PC-9 (cell line): ENCODE measurements at regions of chr2 and their contacts with region 1.

Region 1: GRCh38 chr2:20231632-20232031 is 6.7 kb upstream of the SDC1 start:
- DNase-seq: peak; percentile 96 to 100
- H3K4me3 ChIP-seq: no peak overlapping the region; the same call in 1 of the 2 replicates
- H3K27ac ChIP-seq: peak overlapping the region; percentile 99
- H3K4me1 ChIP-seq: peaks cover 61% of the 10 kb centered on the region
- H3K27me3 ChIP-seq: no peaks in the 10 kb centered on the region
- CTCF ChIP-seq: no peak

Region 2: GRCh38 chr2:20051532-20052228 is 180.0 kb before region 1 on chr2 and contains the start of gene LAPTM4A:
- CTCF ChIA-PET with region 1: no interaction called
- POLR2A ChIA-PET with region 1: interaction called, 19 read pairs
- intact Hi-C with region 1: loop called (anchors 5 kb)
- DNase-seq: peak; percentile 96 to 100
- H3K4me3 ChIP-seq: peak within 1 kb of the TSS; percentile 85
- H3K27ac ChIP-seq: peak within 1 kb of the TSS; percentile 94
- H3K4me1 ChIP-seq: peaks cover 36% of the 10 kb centered on the region
- H3K27me3 ChIP-seq: no peaks in the 10 kb centered on the region
- CTCF ChIP-seq: no peak
- total RNA-seq, gene LAPTM4A: 96.6 and 125 TPM in 2 replicates

Region 3: GRCh38 chr2:20106746-20107145 is 124.9 kb before region 1 on chr2:
- CTCF ChIA-PET with region 1: interaction called, 11 read pairs
- POLR2A ChIA-PET with region 1: interaction called, 4 read pairs
- intact Hi-C with region 1: loop called (anchors 2 kb)
- DNase-seq: peak; percentile 70 to 83
- H3K4me3 ChIP-seq: peak overlapping the region; percentile 68
- H3K27ac ChIP-seq: peak overlapping the region; percentile 32; the same call in 1 of the 2 replicates
- H3K4me1 ChIP-seq: peaks cover 45% of the 10 kb centered on the region
- H3K27me3 ChIP-seq: no peaks in the 10 kb centered on the region
- CTCF ChIP-seq: peak; percentile 92

Region 4: GRCh38 chr2:20186078-20186854 is 45.4 kb before region 1 on chr2:
- CTCF ChIA-PET with region 1: interaction called, 8 read pairs
- POLR2A ChIA-PET with region 1: interaction called, 11 read pairs
- intact Hi-C with region 1: loop called (anchors 2 kb)
- DNase-seq: peak; percentile 74 to 93
- H3K4me3 ChIP-seq: peak overlapping the region; percentile 54
- H3K27ac ChIP-seq: peak overlapping the region; percentile 92
- H3K4me1 ChIP-seq: peaks cover 59% of the 10 kb centered on the region
- H3K27me3 ChIP-seq: no peaks in the 10 kb centered on the region
- CTCF ChIP-seq: no peak

Region 5: GRCh38 chr2:20207051-20207450 is 24.6 kb before region 1 on chr2:
- CTCF ChIA-PET with region 1: no interaction called
- POLR2A ChIA-PET with region 1: no interaction called
- intact Hi-C with region 1: no loop called
- DNase-seq: no peak
- H3K4me3 ChIP-seq: no peak overlapping the region
- H3K27ac ChIP-seq: no peak overlapping the region
- H3K4me1 ChIP-seq: peaks cover 9% of the 10 kb centered on the region; the same call in 1 of the 2 replicates
- H3K27me3 ChIP-seq: no peaks in the 10 kb centered on the region
- CTCF ChIP-seq: no peak

Region 6: DNA sequence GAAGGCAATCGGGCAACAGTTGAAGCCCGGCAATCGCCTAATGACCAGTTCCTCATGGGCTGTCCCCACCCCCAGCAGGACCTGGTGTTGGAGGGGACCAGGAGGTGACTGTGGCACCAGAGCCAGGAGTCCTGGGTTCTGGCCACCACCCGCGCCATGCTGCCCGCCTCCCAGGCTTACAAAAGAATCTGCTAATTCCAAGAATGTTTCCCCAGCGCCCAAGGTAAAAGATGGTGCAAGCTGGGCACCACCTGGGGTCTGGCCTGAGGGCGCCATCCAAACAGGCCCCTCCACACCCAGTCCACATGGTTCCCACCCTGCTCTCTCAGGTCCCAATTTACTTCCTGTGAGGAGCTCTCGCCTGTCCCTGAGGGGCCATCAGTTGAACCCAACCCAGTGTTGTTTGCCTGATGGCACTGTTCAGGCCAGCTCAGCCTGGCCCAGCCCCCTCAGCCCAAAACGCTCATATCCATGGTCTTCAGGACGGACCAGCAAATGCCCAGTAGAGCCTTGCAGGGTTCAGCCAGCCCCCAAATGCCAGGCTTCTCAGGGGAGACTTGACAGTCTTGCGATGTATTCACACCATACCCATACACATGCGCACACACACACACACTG is 11.8 kb before region 1 on chr2:
- CTCF ChIA-PET with region 1: interaction called, 11 read pairs
- POLR2A ChIA-PET with region 1: interaction called, 11 read pairs
- intact Hi-C with region 1: loop called (anchors 1 kb)
- DNase-seq: no peak
- H3K4me3 ChIP-seq: no peak overlapping the region
- H3K27ac ChIP-seq: no peak overlapping the region
- H3K4me1 ChIP-seq: peaks cover 34% of the 10 kb centered on the region
- H3K27me3 ChIP-seq: no peaks in the 10 kb centered on the region
- CTCF ChIP-seq: no peak

Region 7: DNA sequence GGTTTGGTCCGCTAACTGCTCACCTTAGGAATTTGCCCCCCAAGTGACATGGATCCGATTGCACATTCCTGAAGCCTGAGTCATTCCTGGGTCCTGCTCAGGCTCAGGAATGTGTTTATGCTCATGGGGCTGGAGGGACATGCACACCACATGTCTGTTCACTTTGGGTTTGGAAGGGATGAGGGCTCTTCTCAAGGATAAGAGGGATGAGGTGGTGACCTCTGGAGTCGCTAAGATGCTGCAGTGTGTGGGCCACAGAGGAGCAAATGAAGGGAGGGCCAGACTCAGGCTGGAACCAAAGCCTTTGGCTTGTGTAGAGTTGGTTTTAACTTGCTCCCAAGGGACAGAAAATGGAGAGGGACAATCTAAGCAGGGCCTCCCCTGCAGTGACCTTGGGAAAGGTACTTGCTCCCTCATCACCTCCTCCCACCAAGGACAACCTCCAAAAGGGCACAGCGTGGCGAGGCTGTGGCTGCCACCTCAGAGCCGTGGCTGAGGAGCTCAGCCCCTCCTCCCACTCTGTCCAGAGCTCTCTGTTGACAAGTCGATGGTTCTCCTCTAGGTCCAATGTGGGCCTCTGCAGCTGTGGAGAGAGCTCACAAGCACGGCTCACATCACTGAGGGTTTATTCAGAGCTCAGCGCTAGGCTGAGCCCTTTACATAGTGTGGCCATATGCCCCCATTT is 353.1 kb after region 1 on chr2:
- CTCF ChIA-PET with region 1: no interaction called
- POLR2A ChIA-PET with region 1: interaction called, 15 read pairs
- intact Hi-C with region 1: no loop called
- DNase-seq: peak in 1 of 2 experiments; percentile 95
- H3K4me3 ChIP-seq: no peak overlapping the region
- H3K27ac ChIP-seq: peak overlapping the region; percentile 65
- H3K4me1 ChIP-seq: peaks cover 47% of the 10 kb centered on the region
- H3K27me3 ChIP-seq: no peaks in the 10 kb centered on the region
- CTCF ChIP-seq: no peak